Heart right ventricle (tissue), 16 donors: ENCODE measurements at regions of chr4 and their contacts with region 1.

Region 1: GRCh38 chr4:151690164-151690870 is 70.5 kb downstream of the GATB start:
- DNase-seq: no peak
- ATAC-seq: no peak
- H3K4me3 ChIP-seq: no peak overlapping the region
- H3K27ac ChIP-seq: peak overlapping the region in 9 of 10 donors; percentile 16 to 93 (median 82)
- H3K4me1 ChIP-seq: peaks cover 28 to 92% (median 52%) of the 10 kb centered on the region in 9 donors
- H3K27me3 ChIP-seq: no peaks in the 10 kb centered on the region
- CTCF ChIP-seq: no peak

Region 2: DNA sequence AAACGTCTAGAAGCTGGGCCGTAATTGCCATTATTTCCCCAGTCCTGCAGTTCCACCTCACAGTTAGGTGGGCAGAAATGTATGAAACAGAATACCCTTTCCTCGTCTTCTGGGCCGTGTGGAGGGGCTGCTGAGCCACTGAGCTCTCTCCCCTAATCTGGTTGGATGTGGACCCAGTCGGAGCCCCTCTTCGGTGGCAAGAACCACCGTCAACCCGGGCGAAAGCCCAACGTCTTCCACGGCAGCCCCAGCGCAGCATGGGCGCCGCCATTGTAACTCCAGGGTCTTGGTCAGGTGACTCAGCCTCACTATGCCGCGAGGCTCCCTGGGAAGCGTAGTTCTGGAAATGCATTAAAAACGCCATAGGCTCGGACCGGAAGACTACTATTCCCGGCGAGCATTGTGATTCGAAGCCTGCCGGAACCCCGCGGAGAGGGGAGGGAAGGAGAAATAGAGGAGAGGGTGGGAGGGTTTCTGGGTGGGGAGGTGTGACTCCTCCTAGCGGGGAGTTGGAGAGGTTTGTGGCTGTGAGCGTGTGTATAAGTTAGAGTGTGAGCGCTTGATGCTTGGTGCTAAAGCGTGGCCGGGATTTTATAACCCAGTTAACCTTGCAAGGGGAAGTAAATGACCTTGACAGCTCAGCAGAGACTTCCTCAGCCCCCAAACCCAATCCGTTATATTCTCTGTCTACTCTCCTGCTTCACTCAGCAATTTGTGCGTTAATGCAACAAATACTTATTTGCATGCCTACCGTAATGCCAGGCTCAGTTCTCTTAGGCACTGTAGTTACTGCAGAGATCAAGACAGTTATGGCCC is 70.6 kb after region 1 on chr4 and contains the start of gene GATB:
- intact Hi-C with region 1: loop called in 2 of 10 experiments (anchors 5 kb)
- DNase-seq: peak; percentile 85 to 95
- ATAC-seq: peak; percentile 99 to 100 (median 100)
- H3K4me3 ChIP-seq: peak within 1 kb of the TSS; percentile 73 to 92 (median 83)
- H3K27ac ChIP-seq: peak within 1 kb of the TSS; percentile 62 to 82 (median 76)
- H3K4me1 ChIP-seq: peaks cover 0 to 24% (median 12%) of the 10 kb centered on the region in 9 donors
- H3K27me3 ChIP-seq: peaks cover 0 to 4% (median 0%) of the 10 kb centered on the region in 7 donors
- CTCF ChIP-seq: peak; percentile 38 to 70 (median 58)
- total RNA-seq, gene GATB: 79.0 to 122 (median 88.5) TPM

Region 3: GRCh38 chr4:151781026-151781425 is 90.7 kb after region 1 on chr4:
- intact Hi-C with region 1: no loop called
- DNase-seq: peak; percentile 20 to 69
- ATAC-seq: peak; percentile 80 to 96 (median 92)
- H3K4me3 ChIP-seq: no peak overlapping the region
- H3K27ac ChIP-seq: peak overlapping the region in 9 of 10 donors; percentile 41 to 79 (median 56)
- H3K4me1 ChIP-seq: peaks cover 0 to 37% (median 9%) of the 10 kb centered on the region in 9 donors
- H3K27me3 ChIP-seq: no peaks in the 10 kb centered on the region
- CTCF ChIP-seq: no peak